Activated CD8-positive, alpha-beta memory T cell treated with anti-CD3 and anti-CD28 coated beads, Interleukin-2, amount 10 ng/mL, durations not matched to agents 7 days and 5 days (primary cell): ENCODE measurements at regions of chr17 and their contacts with region 1.

Region 1: DNA sequence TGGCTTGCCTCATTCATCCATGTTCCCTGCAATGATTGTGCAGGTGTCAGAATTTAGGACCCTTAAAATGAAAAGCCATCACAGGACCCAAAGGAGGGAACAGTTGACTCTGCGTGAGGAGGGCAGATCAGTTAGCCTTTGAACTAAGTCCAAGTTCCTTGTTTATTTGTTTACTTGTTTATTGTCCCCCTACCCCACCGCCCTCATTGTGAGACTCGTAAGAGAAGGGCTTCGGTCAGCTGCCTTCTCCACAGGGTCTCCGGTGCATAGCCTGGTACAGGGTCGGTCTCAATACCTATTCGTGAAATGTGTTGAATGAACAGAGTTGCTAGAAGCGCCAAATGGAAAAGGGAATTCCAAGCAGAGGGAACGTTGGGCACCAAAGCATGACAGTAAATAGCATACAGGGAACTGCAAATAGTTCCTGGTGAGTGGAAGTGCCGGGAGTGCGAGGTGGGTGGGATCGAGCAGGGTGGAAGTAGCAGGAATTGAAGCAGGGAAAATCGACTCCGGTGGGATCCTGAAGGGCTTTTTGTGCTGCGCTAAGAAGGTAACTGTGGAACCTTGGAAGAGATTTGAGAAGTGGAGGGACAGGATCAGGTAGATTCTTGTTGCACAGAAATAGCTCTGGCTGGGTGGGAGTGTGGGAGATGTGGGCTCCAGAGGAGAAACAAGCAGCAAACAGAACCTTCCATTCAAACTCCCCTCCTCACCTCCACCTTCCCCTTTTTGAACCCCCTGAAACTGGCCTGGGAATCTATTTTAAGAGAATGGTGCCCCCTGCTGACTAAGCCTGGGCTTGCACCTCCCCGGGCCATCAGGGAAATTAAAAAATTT is 12.7 kb downstream of the SLC35B1 start:
- DNase-seq: peak; percentile 83
- ATAC-seq: peak; percentile 38
- H3K4me3 Mint-ChIP-seq: no peak overlapping the region
- H3K27ac Mint-ChIP-seq: peak overlapping the region; percentile 83
- H3K4me1 Mint-ChIP-seq: peaks cover 33% of the 10 kb centered on the region
- H3K27me3 Mint-ChIP-seq: no peaks in the 10 kb centered on the region

Region 2: GRCh38 chr17:49656247-49656646 is 38.8 kb before region 1 on chr17:
- CTCF ChIA-PET with region 1: no interaction called
- DNase-seq: no peak
- ATAC-seq: no peak
- H3K4me3 Mint-ChIP-seq: no peak overlapping the region
- H3K27ac Mint-ChIP-seq: no peak overlapping the region
- H3K4me1 Mint-ChIP-seq: peaks cover 13% of the 10 kb centered on the region
- H3K27me3 Mint-ChIP-seq: no peaks in the 10 kb centered on the region

Region 3: DNA sequence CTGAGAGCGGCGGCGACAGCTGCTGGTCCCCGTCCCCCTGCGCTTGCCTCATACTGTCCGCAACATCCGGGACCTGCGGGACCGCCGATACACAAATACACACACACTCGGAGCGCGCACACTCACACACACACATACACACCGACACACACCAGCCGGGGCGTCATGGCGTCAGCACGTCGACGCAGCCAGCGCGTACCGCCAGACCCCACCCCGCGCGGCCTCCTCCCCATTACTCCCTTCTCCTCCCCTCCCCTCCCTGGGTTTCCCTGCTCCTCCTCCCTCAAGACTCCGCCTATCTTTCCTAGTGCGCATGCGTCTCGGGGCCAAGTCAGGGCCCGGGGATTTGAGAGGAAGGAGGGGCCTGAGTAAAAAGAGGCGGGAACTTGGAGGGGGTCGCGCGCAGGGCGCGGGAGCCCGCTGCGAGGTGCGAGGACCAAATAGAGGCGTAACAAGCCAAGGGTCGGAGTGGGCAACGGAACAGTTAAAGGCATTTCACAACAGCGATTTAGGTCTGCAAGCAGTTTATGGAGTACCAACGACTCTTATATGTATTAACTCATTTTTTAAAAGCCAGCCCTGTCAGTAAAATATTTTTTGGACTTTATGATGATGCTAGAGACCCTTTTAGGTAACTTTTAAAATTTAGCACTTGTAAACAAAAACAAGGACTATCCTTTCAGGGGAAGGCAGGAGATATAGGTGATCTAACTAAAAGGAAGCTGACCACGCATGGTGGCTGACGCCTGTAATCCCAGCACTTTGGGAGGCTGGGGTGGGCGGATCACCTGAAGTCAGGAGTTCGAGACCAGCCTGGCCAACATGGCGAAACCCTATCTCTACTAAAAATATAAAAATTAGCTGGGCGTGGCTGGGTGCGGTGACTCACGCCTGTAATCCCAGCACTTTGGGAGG is 16.9 kb before region 1 on chr17 and contains the start of gene SPOP:
- CTCF ChIA-PET with region 1: interaction called, 16 read pairs
- DNase-seq: peak; percentile 100
- ATAC-seq: peak; percentile 89
- H3K4me3 Mint-ChIP-seq: peak within 1 kb of the TSS; percentile 88
- H3K27ac Mint-ChIP-seq: peak within 1 kb of the TSS; percentile 96
- H3K4me1 Mint-ChIP-seq: peaks cover 37% of the 10 kb centered on the region
- H3K27me3 Mint-ChIP-seq: peaks cover 5% of the 10 kb centered on the region
- total RNA-seq, gene SPOP: 49.7 to 51.5 TPM

Region 4: DNA sequence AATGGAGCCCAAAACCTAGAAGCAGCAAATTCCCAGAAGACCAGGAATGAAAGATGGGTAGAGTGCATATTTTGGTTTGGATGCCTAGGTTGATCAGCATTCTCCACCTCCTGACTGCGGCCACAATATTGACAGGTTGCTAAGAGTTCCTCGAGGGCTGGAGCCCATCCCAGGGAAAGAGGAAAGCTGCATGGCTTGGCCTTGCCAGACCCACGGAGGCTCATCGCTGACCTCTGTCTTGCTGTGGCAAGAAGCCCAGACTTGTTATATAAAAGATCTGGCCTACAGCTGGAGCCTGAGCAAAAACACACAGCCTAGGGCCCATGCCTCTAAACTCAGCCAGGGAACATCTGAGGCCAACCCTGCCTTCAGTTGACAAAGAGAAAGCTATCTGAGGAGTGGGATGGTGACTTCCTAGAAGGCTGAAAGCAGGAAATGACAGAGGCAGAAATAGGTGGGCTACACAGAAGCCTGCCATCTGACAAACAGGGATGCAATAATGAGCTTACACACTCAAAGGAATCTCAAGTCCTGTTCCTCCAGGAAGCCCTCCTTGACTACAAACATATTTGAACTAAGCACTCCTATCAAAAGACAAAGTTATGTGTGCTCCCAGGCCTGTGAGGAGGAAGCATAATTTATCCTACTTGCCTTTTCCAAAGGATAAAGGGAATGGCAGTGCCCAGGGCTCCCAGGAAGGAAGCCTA is 35.2 kb after region 1 on chr17:
- CTCF ChIA-PET with region 1: no interaction called
- DNase-seq: no peak
- ATAC-seq: no peak
- H3K4me3 Mint-ChIP-seq: no peak overlapping the region
- H3K27ac Mint-ChIP-seq: no peak overlapping the region
- H3K4me1 Mint-ChIP-seq: peaks cover 45% of the 10 kb centered on the region
- H3K27me3 Mint-ChIP-seq: no peaks in the 10 kb centered on the region

Region 5: GRCh38 chr17:49788478-49789242 is 93.6 kb after region 1 on chr17 and contains the start of gene KAT7:
- CTCF ChIA-PET with region 1: interaction called, 11 read pairs
- DNase-seq: peak; percentile 99
- ATAC-seq: peak; percentile 95
- H3K4me3 Mint-ChIP-seq: peak within 1 kb of the TSS; percentile 91
- H3K27ac Mint-ChIP-seq: peak within 1 kb of the TSS; percentile 97
- H3K4me1 Mint-ChIP-seq: peaks cover 53% of the 10 kb centered on the region
- H3K27me3 Mint-ChIP-seq: no peaks in the 10 kb centered on the region
- total RNA-seq, gene KAT7: 76.9 to 80.6 TPM

Region 6: DNA sequence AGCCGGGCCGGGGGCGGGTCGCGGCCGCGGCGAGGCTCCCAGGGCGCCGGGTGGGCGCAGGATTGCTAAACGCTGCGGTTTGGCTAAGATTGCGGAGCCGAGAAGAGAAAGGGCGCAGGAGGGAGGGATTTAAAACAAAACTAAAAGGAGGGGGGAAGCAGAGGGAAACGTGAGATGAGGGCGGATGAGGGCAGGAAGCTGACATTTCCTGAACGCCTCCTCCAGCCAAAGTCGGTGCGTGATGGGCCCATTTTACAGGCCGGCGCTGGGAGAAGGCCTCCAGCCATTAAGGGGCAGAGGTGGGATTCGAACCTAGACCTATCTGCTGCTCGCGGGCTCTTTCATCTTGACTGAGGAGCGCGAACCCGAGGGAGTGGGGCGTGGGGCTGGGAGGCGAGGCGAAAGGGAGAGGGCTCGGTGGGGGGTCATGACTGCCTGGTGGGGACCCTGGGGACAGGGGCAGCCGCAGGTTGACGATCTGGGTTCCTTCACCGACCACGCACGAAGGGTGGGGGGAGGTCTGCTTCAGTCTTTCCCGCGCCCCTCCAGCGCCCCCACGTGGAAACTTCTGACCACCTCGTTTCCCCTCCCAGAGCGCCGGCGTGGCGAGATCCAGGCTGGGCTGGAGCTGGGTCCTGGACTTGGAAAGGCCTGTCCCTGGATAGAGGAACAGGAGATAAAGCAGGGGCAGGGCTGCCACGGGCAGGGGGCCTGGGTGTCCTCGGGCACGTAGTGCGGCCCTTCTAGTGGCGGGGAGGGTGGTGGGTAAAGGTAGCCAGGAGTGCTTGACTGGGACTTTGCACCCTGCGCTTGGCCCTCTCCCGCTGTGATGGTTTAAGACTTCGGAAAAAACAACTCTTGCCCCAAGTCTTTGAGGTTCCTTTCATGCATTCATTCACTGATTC is 156.6 kb after region 1 on chr17:
- CTCF ChIA-PET with region 1: interaction called, 11 read pairs
- DNase-seq: peak; percentile 75
- ATAC-seq: peak; percentile 79
- H3K4me3 Mint-ChIP-seq: peak overlapping the region; percentile 79
- H3K27ac Mint-ChIP-seq: peak overlapping the region; percentile 80
- H3K4me1 Mint-ChIP-seq: peaks cover 13% of the 10 kb centered on the region
- H3K27me3 Mint-ChIP-seq: peaks cover 18% of the 10 kb centered on the region